ENCODE measurements at regions of chr16 and their contacts with region 1.

Region 1: GRCh38 chr16:65044873-65045272 is 77.0 kb downstream of the CDH11 start:
- DNase-seq: no peak

Region 2: GRCh38 chr16:65932350-65933072 is 887.6 kb after region 1 on chr16:
- intact Hi-C with region 1: loop called in 1 of 2 experiments (anchors 5 kb)
- DNase-seq: no peak